Caco-2 (cell line): ENCODE measurements at regions of chr12 and their contacts with region 1.

Region 1: GRCh38 chr12:22334410-22335290 is at the start of gene ST8SIA1:
- DNase-seq: no peak
- H3K4me3 ChIP-seq: peak within 1 kb of the TSS; percentile 53
- H3K4me3 Mint-ChIP-seq: peak within 1 kb of the TSS; percentile 82
- H3K27ac Mint-ChIP-seq: no peak within 1 kb of the TSS
- H3K4me1 ChIP-seq: peaks cover 6% of the 10 kb centered on the region; the same call in 1 of the 2 replicates
- H3K4me1 Mint-ChIP-seq: no peaks in the 10 kb centered on the region
- H3K27me3 ChIP-seq: no peaks in the 10 kb centered on the region; the same call in 1 of the 2 replicates
- H3K27me3 Mint-ChIP-seq: peaks cover 25% of the 10 kb centered on the region
- CTCF ChIP-seq: no peak
- total RNA-seq, gene ST8SIA1: not detected in 2 replicates

Region 2: DNA sequence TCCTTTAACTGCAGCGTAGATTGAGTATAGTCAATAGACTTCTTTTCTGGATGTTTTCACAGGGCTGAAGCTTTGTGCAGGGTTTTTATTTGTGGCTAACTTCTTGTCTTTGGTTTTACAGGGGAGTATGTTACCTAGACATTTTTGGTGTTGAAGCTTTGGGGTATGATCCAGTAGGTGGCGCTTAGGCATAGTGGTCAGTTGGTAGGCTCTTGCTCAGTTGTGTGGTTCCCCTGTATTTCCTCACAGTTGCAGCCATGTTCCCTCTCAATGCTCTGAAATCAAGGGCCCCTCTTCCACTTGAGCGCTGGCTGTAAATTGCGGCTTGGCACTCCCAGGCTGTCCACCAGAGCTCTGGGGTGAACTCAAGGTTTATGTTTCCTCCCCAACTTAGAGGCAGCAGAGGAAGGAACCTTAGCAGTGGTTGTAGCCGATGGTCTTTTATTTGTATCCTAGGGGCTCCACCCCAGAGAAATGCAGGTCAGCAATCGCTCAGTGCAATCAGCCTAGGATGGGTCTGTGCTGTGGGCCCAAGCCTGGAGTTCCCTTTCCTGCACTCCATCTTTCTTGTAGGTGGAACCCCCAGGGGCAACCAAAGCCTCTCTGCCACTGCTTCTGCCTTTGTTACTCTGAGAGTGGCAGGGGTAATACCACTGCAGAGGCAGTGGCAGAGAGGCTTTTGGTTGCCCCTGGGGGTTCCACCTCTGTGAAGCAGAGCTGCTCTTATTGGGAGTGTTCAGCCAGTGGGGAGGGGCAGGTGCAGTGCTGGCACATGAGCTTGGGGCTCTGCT is 233.5 kb before region 1 on chr12:
- CTCF ChIA-PET with region 1: interaction called, 4 read pairs
- POLR2A ChIA-PET with region 1: no interaction called
- intact Hi-C with region 1: loop called (anchors 1 kb)
- DNase-seq: peak in 1 of 2 experiments; percentile 60
- H3K4me3 ChIP-seq: no peak overlapping the region
- H3K4me3 Mint-ChIP-seq: no peak overlapping the region
- H3K27ac Mint-ChIP-seq: no peak overlapping the region
- H3K4me1 ChIP-seq: no peaks in the 10 kb centered on the region
- H3K4me1 Mint-ChIP-seq: no peaks in the 10 kb centered on the region
- H3K27me3 ChIP-seq: no peaks in the 10 kb centered on the region; the same call in 1 of the 2 replicates
- H3K27me3 Mint-ChIP-seq: peaks cover 13% of the 10 kb centered on the region
- CTCF ChIP-seq: peak; percentile 55 to 60

Region 3: DNA sequence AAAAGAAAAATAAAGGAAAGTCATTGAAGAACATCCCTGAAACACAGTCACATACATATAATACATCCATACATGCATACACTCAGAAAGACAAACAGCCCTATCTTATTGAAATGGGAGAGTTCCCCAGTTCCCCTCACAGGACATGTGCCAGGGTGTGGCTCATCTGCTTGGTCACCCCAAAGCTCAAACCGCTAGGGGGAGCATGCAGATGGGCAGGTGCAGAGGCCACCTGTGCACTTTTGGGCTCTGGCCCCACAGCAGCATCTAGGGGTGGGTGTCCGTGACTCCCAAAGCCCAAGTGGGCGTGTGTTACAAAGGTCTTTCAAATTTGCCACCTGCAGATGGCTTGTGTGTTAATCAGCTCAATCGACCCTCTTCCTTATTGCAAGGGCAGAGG is 213.4 kb before region 1 on chr12:
- CTCF ChIA-PET with region 1: no interaction called
- POLR2A ChIA-PET with region 1: no interaction called
- intact Hi-C with region 1: loop called (anchors 5 kb)
- DNase-seq: peak in 1 of 2 experiments; percentile 65
- H3K4me3 ChIP-seq: no peak overlapping the region
- H3K4me3 Mint-ChIP-seq: no peak overlapping the region
- H3K27ac Mint-ChIP-seq: no peak overlapping the region
- H3K4me1 ChIP-seq: no peaks in the 10 kb centered on the region
- H3K4me1 Mint-ChIP-seq: no peaks in the 10 kb centered on the region
- H3K27me3 ChIP-seq: peaks cover 2% of the 10 kb centered on the region
- H3K27me3 Mint-ChIP-seq: peaks cover 5% of the 10 kb centered on the region
- CTCF ChIP-seq: peak; percentile 65 to 68

Region 4: GRCh38 chr12:22312336-22312735 is 22.3 kb before region 1 on chr12:
- CTCF ChIA-PET with region 1: no interaction called
- POLR2A ChIA-PET with region 1: no interaction called
- intact Hi-C with region 1: no loop called
- DNase-seq: no peak
- H3K4me3 ChIP-seq: no peak overlapping the region
- H3K4me3 Mint-ChIP-seq: no peak overlapping the region
- H3K27ac Mint-ChIP-seq: no peak overlapping the region
- H3K4me1 ChIP-seq: no peaks in the 10 kb centered on the region
- H3K4me1 Mint-ChIP-seq: no peaks in the 10 kb centered on the region
- H3K27me3 ChIP-seq: no peaks in the 10 kb centered on the region
- H3K27me3 Mint-ChIP-seq: peaks cover 26% of the 10 kb centered on the region
- CTCF ChIP-seq: no peak